B cell (primary cell): ENCODE measurements at regions of chr6 and their contacts with region 1.

Region 1: GRCh38 chr6:30616811-30617564 is at the start of gene PPP1R10:
- DNase-seq: peak; percentile 100
- ATAC-seq: peak; percentile 77
- H3K4me3 ChIP-seq: peak within 1 kb of the TSS; percentile 93 to 100 (median 98)
- H3K4me3 Mint-ChIP-seq: peak within 1 kb of the TSS; percentile 92
- H3K27ac ChIP-seq: peak within 1 kb of the TSS; percentile 99
- H3K27ac Mint-ChIP-seq: peak within 1 kb of the TSS; percentile 100
- H3K4me1 ChIP-seq: peaks cover 33 to 36% of the 10 kb centered on the region in 2 donors
- H3K4me1 Mint-ChIP-seq: peaks cover 38% of the 10 kb centered on the region
- H3K27me3 ChIP-seq: no peaks in the 10 kb centered on the region
- H3K27me3 Mint-ChIP-seq: no peaks in the 10 kb centered on the region
- CTCF ChIP-seq: no peak
- total RNA-seq, gene PPP1R10: 157 and 177 TPM in 2 replicates

Region 2: DNA sequence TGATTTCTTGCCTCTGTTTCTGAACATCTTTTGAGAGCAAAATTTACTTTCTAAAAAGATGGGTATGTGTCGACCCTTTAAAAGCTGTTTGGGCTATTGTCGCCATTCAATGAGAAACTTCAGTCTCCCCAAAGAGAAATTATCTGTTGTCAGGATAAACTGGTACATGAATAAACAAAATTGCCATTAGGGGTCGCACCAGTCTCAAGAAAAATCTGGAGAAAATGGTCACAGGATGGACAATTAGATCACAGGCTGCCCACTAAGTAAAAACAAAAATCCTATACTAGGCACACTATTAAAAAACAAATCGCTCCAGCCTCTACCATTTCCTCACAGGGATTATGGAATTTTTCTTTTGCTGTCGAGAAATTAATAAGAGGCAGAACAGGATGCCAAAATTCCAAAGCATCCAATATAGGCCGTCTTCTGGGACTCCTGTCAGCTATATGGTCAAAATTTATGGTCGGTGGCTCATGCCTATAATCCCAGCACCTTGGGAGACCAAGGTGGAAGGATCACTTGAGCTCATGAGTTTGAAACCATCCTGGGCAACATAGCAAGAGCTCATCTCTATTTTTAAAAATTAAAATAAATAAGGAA is 133.2 kb before region 1 on chr6:
- CTCF ChIA-PET with region 1: interaction called, 10 read pairs
- POLR2A ChIA-PET with region 1: interaction called, 6 read pairs
- intact Hi-C with region 1: no loop called
- DNase-seq: peak; percentile 76
- ATAC-seq: peak; percentile 23
- H3K4me3 ChIP-seq: no peak overlapping the region
- H3K4me3 Mint-ChIP-seq: no peak overlapping the region
- H3K27ac ChIP-seq: no peak overlapping the region
- H3K27ac Mint-ChIP-seq: no peak overlapping the region
- H3K4me1 ChIP-seq: peaks cover 24 to 28% of the 10 kb centered on the region in 2 donors
- H3K4me1 Mint-ChIP-seq: peaks cover 33% of the 10 kb centered on the region
- H3K27me3 ChIP-seq: peaks cover 0 to 28% (median 21%) of the 10 kb centered on the region in 4 experiments
- H3K27me3 Mint-ChIP-seq: peaks cover 33% of the 10 kb centered on the region
- CTCF ChIP-seq: peak; percentile 84

Region 3: DNA sequence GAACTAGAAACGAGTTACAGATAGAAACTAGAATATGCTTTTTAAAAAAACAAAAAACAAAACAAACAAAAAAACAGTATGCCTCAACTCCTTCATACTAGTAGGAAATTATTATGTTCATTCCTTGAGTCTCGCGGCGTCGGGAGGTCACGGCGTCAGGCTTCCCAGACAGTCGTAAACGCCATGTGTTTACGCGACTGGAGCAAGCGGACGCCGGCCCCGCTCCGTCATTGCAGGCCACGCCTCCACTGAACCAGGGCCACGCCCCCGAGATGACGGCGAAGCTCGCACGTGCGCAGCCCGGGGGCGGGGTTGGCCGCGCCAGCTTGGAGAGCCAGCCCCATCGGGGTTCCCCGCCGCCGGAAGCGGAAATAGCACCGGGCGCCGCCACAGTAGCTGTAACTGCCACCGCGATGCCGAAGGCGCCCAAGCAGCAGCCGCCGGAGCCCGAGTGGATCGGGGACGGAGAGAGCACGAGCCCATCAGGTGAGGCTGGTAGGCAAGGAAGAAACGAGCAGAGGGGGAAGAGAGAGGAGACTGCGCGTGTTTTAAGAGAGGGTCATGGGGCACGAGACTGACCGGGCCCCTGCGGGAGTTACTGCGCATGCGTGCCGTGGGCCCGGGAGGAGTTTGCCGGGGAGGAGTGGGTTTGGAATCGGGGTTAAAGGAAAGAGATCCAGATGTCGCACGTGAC is 45.8 kb before region 1 on chr6 and contains the start of gene ABCF1:
- CTCF ChIA-PET with region 1: interaction called, 4 read pairs
- POLR2A ChIA-PET with region 1: interaction called, 19 read pairs
- intact Hi-C with region 1: loop called (anchors 1 kb)
- DNase-seq: peak; percentile 99
- ATAC-seq: peak; percentile 98
- H3K4me3 ChIP-seq: peak within 1 kb of the TSS; percentile 69 to 93 (median 87)
- H3K4me3 Mint-ChIP-seq: peak within 1 kb of the TSS; percentile 96
- H3K27ac ChIP-seq: peak within 1 kb of the TSS; percentile 82 to 92
- H3K27ac Mint-ChIP-seq: peak within 1 kb of the TSS; percentile 93
- H3K4me1 ChIP-seq: peaks cover 25 to 32% of the 10 kb centered on the region in 2 donors
- H3K4me1 Mint-ChIP-seq: peaks cover 54% of the 10 kb centered on the region
- H3K27me3 ChIP-seq: no peaks in the 10 kb centered on the region
- H3K27me3 Mint-ChIP-seq: no peaks in the 10 kb centered on the region
- CTCF ChIP-seq: no peak
- total RNA-seq, gene ABCF1: 60.9 and 63.7 TPM in 2 replicates

Region 4: DNA sequence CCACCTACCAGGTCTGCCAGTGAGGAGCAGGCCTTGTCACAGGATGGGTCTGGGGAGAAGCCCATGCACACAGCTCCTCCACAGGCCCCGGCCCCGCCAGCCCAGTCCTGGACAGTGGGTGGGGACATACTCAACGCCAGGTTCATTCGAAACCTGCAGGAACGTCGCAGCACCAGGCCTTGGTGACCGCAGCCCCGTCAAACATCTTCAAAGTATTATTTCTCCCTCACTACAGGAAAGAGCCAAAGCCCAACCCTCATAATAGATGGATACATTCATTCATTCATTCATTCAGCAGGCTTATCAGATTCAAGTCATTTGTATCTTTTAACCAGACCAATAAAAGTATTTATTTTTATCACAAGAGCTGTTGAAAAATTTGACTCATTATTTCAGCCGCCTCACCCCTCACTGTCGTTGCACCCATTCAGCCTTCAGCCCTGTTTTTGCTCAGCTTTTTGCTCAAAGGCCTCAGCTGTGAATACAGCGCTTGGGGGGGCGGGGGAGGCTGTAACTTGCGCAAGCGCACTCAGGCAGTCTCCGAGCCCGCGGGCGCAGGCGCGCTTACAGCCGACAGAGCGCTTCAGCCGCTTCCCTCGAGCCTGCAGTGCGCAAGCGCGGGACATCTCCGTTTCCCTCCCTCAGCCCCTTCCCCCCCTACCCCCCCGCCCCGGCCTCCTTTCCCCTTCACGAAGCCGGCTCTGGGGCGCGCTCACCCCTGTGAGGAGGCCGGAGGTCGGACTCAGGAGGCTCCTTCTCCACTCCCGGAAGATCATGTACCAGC is 29.7 kb after region 1 on chr6 and contains the start of gene C6orf136:
- CTCF ChIA-PET with region 1: interaction called, 3 read pairs
- POLR2A ChIA-PET with region 1: interaction called, 3 read pairs
- intact Hi-C with region 1: loop called (anchors 1 kb)
- DNase-seq: peak; percentile 95
- ATAC-seq: peak; percentile 77
- H3K4me3 ChIP-seq: peak within 1 kb of the TSS; percentile 24 to 93 (median 80)
- H3K4me3 Mint-ChIP-seq: peak within 1 kb of the TSS; percentile 89
- H3K27ac ChIP-seq: peak within 1 kb of the TSS; percentile 76 to 89
- H3K27ac Mint-ChIP-seq: peak within 1 kb of the TSS; percentile 95
- H3K4me1 ChIP-seq: peaks cover 12 to 21% of the 10 kb centered on the region in 2 donors
- H3K4me1 Mint-ChIP-seq: peaks cover 28% of the 10 kb centered on the region
- H3K27me3 ChIP-seq: no peaks in the 10 kb centered on the region
- H3K27me3 Mint-ChIP-seq: no peaks in the 10 kb centered on the region
- CTCF ChIP-seq: no peak
- total RNA-seq, gene C6orf136: 24.9 and 37.2 TPM in 2 replicates

Region 5: GRCh38 chr6:30717042-30717844 is 100.3 kb after region 1 on chr6 and contains the start of gene MDC1:
- CTCF ChIA-PET with region 1: interaction called, 17 read pairs
- POLR2A ChIA-PET with region 1: interaction called, 20 read pairs
- intact Hi-C with region 1: loop called (anchors 1 kb)
- DNase-seq: peak; percentile 100
- ATAC-seq: peak; percentile 70
- H3K4me3 ChIP-seq: peak within 1 kb of the TSS; percentile 71 to 82 (median 80)
- H3K4me3 Mint-ChIP-seq: peak within 1 kb of the TSS; percentile 96
- H3K27ac ChIP-seq: peak within 1 kb of the TSS; percentile 91 to 94
- H3K27ac Mint-ChIP-seq: peak within 1 kb of the TSS; percentile 99
- H3K4me1 ChIP-seq: peaks cover 23 to 33% of the 10 kb centered on the region in 2 donors
- H3K4me1 Mint-ChIP-seq: peaks cover 40% of the 10 kb centered on the region
- H3K27me3 ChIP-seq: no peaks in the 10 kb centered on the region
- H3K27me3 Mint-ChIP-seq: no peaks in the 10 kb centered on the region
- CTCF ChIP-seq: peak; percentile 50
- total RNA-seq, gene MDC1: 69.3 and 87.4 TPM in 2 replicates

Region 6: DNA sequence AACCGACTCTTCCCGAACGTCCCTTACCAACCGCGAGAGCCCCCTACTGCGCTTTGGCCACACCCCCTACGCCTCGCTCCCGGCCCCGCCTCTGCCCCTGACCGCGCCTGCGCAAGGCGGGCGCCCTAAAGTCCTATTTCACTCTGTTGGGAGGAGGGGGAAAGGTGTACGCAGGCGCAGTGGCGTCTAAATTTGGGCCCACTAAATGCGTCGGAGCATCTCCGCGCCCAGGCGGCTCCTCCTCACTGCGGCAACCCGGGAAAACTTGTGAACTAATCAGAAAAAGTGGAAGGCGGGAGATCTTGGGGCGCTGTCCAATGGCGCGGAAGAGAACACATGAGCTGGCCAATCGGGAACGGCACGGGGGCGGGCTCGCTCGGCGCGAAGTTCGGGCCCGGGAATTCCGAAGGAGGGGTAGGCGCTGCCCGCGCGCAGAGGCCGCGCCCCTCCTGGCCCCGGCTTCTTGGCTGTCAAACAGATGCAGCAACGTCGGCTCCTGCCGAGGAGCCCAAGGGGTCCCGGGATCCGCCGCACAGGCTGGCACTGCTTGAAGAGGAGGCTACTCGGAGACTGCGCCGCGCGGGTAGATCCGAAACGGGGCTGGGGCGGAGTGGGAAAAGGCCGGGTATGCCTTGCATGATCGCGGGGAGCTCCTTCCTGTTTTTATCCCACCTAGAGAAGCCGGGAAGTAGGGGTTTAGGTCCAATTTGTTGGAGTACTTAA is 541.3 kb after region 1 on chr6 and contains the start of gene TCF19:
- CTCF ChIA-PET with region 1: no interaction called
- POLR2A ChIA-PET with region 1: interaction called, 3 read pairs
- intact Hi-C with region 1: loop called (anchors 2 kb)
- DNase-seq: peak; percentile 99
- ATAC-seq: peak; percentile 91
- H3K4me3 ChIP-seq: peak within 1 kb of the TSS; percentile 1 to 90 (median 88)
- H3K4me3 Mint-ChIP-seq: peak within 1 kb of the TSS; percentile 87
- H3K27ac ChIP-seq: peak within 1 kb of the TSS; percentile 53 to 77
- H3K27ac Mint-ChIP-seq: peak within 1 kb of the TSS; percentile 73
- H3K4me1 ChIP-seq: peaks cover 13 to 22% of the 10 kb centered on the region in 2 donors
- H3K4me1 Mint-ChIP-seq: peaks cover 32% of the 10 kb centered on the region
- H3K27me3 ChIP-seq: no peaks in the 10 kb centered on the region
- H3K27me3 Mint-ChIP-seq: no peaks in the 10 kb centered on the region
- CTCF ChIP-seq: no peak
- total RNA-seq, gene TCF19: 9.8 and 10.4 TPM in 2 replicates